BJ (cell line): ENCODE measurements at regions of chr9 and their contacts with region 1.

Region 1: GRCh38 chr9:120383999-120384924 is 195.7 kb downstream of the CDK5RAP2 start:
- DNase-seq: no peak
- H3K4me3 ChIP-seq: no peak overlapping the region
- H3K27me3 ChIP-seq: no peaks in the 10 kb centered on the region
- CTCF ChIP-seq: no peak

Region 2: DNA sequence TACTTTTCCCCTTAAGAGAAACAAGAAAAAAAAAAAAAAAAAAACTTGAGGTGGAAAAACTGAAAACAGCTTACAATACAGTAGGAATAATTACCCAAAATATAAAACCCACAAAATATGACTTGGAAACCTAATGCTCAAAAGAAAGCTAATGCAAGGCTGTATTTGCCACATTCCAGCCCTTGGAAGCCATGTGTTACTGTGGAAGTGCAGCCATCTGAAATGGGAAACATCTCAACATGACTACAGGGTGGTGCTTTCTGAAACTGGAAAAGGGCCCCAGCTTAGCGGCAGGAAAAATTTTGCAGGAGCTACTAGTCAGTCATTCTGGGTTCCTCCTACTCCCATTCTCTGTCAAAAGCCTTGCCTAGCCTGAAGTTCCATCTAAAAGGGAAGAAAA is 175.3 kb after region 1 on chr9:
- CTCF ChIA-PET with region 1: no interaction called
- POLR2A ChIA-PET with region 1: interaction called, 11 read pairs
- DNase-seq: no peak
- H3K4me3 ChIP-seq: no peak overlapping the region
- H3K27me3 ChIP-seq: no peaks in the 10 kb centered on the region
- CTCF ChIP-seq: no peak